Upper lobe of right lung (tissue), 1 donor: ENCODE measurements at regions of chr7 and their contacts with region 1.

Region 1: DNA sequence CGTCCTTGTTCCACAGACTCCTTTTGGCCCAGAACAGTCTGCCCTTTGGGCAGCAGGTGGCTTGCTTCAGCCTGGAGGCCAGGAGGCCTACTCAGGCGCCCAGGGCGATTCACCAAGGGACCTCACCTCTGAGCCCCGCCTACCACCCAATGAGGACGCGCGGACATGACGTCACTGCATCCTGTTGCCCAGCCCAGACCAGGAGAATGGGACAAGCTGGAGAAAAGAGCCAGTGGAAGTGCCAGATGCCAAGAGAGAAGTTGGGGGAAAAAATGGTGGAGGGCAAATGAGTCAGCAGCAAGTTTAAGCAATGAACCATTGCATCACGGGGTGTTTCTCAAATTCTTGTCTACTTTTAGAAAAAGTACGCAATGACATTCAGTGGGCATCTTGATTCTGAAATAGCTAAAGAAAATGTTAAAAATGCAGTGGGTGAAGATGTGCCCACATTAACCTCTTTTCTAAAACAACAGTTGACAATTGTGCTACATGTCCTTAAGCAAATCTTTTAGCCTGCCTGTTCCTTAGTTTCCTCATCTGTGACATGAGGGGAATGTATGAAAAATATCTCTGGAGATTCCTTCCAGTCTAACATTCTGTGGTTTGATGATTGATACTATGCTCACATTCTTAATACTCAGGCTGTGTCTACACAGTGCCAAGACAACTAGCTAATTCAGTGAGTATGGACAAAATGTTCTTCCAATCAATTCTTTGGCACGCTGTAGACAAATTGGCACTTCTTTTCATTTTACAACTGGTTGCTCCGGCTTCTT is 23.9 kb upstream of the LEP start:
- DNase-seq: peak; percentile 78
- ATAC-seq: peak; percentile 75
- H3K4me3 ChIP-seq: no peak overlapping the region
- H3K27ac ChIP-seq: no peak overlapping the region
- H3K4me1 ChIP-seq: no peaks in the 10 kb centered on the region
- H3K27me3 ChIP-seq: no peaks in the 10 kb centered on the region
- CTCF ChIP-seq: no peak

Region 2: DNA sequence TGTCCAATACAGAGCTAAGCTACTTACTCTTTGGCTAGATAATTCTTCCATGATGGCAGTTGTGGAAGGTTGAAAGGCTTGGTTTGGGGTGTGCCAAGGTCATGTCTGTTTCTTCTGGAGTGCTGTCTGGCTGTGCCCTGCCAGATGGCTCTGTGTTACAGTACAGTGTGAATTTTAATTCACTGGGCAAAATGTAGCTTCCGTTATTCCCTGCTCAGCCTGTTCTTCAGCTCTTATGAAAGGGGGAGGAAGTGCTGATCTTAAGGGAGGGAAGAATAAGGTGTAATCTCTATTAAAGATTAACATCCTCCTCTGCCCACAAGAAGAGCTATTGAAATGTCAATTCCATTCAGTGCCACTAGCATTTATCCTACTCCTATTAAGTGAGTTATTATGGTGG is 513.0 kb before region 1 on chr7:
- intact Hi-C with region 1: loop called (anchors 5 kb)
- DNase-seq: no peak
- ATAC-seq: no peak
- H3K4me3 ChIP-seq: no peak overlapping the region
- H3K27ac ChIP-seq: no peak overlapping the region
- H3K4me1 ChIP-seq: no peaks in the 10 kb centered on the region
- H3K27me3 ChIP-seq: no peaks in the 10 kb centered on the region
- CTCF ChIP-seq: no peak

Region 3: GRCh38 chr7:128053023-128053422 is 164.2 kb before region 1 on chr7:
- intact Hi-C with region 1: no loop called
- DNase-seq: no peak
- ATAC-seq: no peak
- H3K4me3 ChIP-seq: no peak overlapping the region
- H3K27ac ChIP-seq: no peak overlapping the region
- H3K4me1 ChIP-seq: peaks cover 5% of the 10 kb centered on the region
- H3K27me3 ChIP-seq: no peaks in the 10 kb centered on the region
- CTCF ChIP-seq: no peak